Cardiac septum (tissue), 1 donor: ENCODE measurements at regions of chr13 and their contacts with region 1.

Region 1: GRCh38 chr13:47420568-47420967 is 523.7 kb upstream of the HTR2A start:
- DNase-seq: no peak

Region 2: GRCh38 chr13:47598340-47598911 is 177.9 kb after region 1 on chr13:
- intact Hi-C with region 1: loop called (anchors 5 kb)
- DNase-seq: no peak